ENCODE measurements at regions of chr6 and their contacts with region 1.

Region 1: GRCh38 chr6:68718385-68719073 is 83.4 kb downstream of the ADGRB3 start:
- DNase-seq: peak in 1 of 5 donors; percentile 26
- ATAC-seq: peak; percentile 42 to 94 (median 75)
- H3K4me3 ChIP-seq: no peak overlapping the region
- H3K27ac ChIP-seq: peak overlapping the region in 4 of 12 donors; percentile 21 to 59 (median 38)
- H3K4me1 ChIP-seq: no peaks in the 10 kb centered on the region
- H3K27me3 ChIP-seq: no peaks in the 10 kb centered on the region
- CTCF ChIP-seq: no peak
- POLR2A ChIP-seq: no peak

Region 2: GRCh38 chr6:68651011-68651985 is 67.2 kb before region 1 on chr6:
- intact Hi-C with region 1: loop called in 1 of 10 experiments (anchors 10 kb)
- DNase-seq: no peak
- ATAC-seq: peak in 1 of 4 donors; percentile 54
- H3K4me3 ChIP-seq: peak overlapping the region in 1 of 12 donors; percentile 8
- H3K27ac ChIP-seq: peak overlapping the region in 3 of 12 donors; percentile 5 to 38 (median 26)
- H3K4me1 ChIP-seq: peaks cover 0 to 14% (median 0%) of the 10 kb centered on the region in 12 donors
- H3K27me3 ChIP-seq: no peaks in the 10 kb centered on the region
- CTCF ChIP-seq: no peak
- POLR2A ChIP-seq: no peak